Panc1 (cell line): ENCODE measurements at regions of chr3 and their contacts with region 1.

Region 1: GRCh38 chr3:194333212-194333980 is 17.7 kb downstream of the CPN2 start:
- DNase-seq: no peak
- ATAC-seq: peak; percentile 97
- H3K4me3 ChIP-seq: peak overlapping the region; percentile 52 to 58
- H3K27ac ChIP-seq: no peak overlapping the region
- H3K4me1 ChIP-seq: no peaks in the 10 kb centered on the region; the same call in 1 of the 2 replicates
- H3K27me3 ChIP-seq: no peaks in the 10 kb centered on the region
- CTCF ChIP-seq: peak; percentile 99

Region 2: DNA sequence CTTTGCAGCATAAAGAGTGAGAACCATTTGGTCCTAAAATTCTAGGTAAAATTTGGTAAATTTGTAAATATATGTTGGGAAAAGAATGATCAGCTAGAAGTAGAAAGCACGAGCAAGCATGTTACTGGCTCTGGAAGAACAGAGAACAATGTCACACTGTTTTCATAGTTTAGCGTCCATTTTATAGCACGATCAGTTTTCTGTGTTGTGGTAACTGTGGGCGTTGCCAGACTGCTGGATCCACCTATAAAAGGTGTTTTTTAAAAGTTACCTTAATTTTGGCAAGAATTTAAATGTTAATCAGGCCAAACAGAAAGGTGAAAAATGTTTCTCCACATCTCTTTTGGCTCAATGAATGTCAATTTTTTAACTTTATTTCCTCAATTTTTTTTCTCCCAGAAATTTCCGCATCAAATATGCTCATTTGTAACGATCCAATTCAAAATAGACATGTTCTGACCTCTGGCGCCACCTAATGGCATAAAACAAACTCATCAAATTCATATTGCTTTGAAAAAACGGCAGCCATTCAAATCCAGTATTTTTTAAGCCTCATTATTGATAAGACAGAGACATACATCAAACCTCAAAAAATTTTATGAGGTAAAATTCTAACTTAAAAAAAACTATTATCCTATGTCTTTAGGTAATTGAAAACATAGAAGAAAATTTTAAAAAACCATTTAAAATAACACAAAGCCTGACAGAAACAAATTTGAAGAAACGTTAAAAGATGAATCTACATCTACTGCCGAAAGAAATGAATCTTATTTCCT is 71.2 kb after region 1 on chr3:
- CTCF ChIA-PET with region 1: interaction called, 4 read pairs
- POLR2A ChIA-PET with region 1: no interaction called
- in situ Hi-C with region 1: no loop called
- intact Hi-C with region 1: loop called (anchors 1 kb)
- DNase-seq: no peak
- ATAC-seq: no peak
- H3K4me3 ChIP-seq: no peak overlapping the region
- H3K27ac ChIP-seq: 0 out of 2 replicates have a peak overlapping the region, but pooled peaks have one; percentile 18
- H3K4me1 ChIP-seq: no peaks in the 10 kb centered on the region
- H3K27me3 ChIP-seq: no peaks in the 10 kb centered on the region
- CTCF ChIP-seq: peak; percentile 79; the same call in 1 of the 2 replicates